Caco-2 (cell line): ENCODE measurements at regions of chr1 and their contacts with region 1.

Region 1: DNA sequence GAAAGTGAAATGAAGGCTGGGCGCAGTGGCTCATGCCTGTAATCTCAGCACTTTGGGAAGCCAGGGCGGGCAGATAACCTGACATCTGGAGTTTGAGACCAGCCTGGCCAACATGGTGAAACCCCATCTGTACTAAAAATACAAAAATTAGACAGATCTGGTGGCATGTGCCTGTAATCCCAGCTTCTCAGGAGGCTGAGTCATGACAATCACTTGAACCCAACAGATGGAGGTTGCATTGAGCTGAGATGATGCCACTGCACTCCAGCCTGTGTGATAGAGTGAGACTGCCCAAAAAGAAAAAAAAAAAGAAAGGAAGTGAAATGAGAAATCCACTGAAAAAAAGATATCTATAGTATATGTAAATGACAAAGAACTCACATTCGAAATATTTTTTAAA is 439.9 kb downstream of the DISC1 start:
- DNase-seq: no peak
- H3K4me3 ChIP-seq: no peak overlapping the region
- H3K4me3 Mint-ChIP-seq: no peak overlapping the region
- H3K27ac Mint-ChIP-seq: no peak overlapping the region
- H3K4me1 ChIP-seq: no peaks in the 10 kb centered on the region
- H3K4me1 Mint-ChIP-seq: no peaks in the 10 kb centered on the region
- H3K27me3 ChIP-seq: no peaks in the 10 kb centered on the region; the same call in 1 of the 2 replicates
- H3K27me3 Mint-ChIP-seq: peaks cover 12% of the 10 kb centered on the region
- CTCF ChIP-seq: no peak

Region 2: GRCh38 chr1:232036181-232036933 is 30.2 kb before region 1 on chr1:
- CTCF ChIA-PET with region 1: no interaction called
- POLR2A ChIA-PET with region 1: no interaction called
- intact Hi-C with region 1: loop called (anchors 2 kb)
- DNase-seq: no peak
- H3K4me3 ChIP-seq: no peak overlapping the region
- H3K4me3 Mint-ChIP-seq: no peak overlapping the region
- H3K27ac Mint-ChIP-seq: no peak overlapping the region
- H3K4me1 ChIP-seq: no peaks in the 10 kb centered on the region
- H3K4me1 Mint-ChIP-seq: no peaks in the 10 kb centered on the region
- H3K27me3 ChIP-seq: no peaks in the 10 kb centered on the region
- H3K27me3 Mint-ChIP-seq: no peaks in the 10 kb centered on the region
- CTCF ChIP-seq: no peak

Region 3: DNA sequence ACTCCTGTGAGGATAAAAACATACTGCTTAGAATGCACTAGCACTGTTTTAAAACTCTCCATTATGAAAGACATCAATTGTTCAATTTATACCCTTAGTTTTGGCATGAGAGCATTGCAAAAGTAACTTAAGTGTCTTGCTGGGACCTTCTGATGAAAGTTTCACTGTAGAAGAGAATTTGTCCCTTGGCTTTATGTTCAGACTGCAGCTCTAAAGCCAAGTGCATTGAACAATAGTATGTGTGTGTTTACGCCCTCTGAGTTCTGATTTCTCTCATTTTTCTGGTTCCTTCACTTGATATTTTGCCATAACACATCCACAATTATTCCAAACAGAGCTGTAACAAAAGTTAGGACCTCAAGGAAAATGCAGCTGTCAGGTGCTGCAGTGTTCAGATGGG is 34.7 kb after region 1 on chr1:
- CTCF ChIA-PET with region 1: no interaction called
- POLR2A ChIA-PET with region 1: no interaction called
- intact Hi-C with region 1: no loop called
- DNase-seq: no peak
- H3K4me3 ChIP-seq: no peak overlapping the region
- H3K4me3 Mint-ChIP-seq: no peak overlapping the region
- H3K27ac Mint-ChIP-seq: no peak overlapping the region
- H3K4me1 ChIP-seq: no peaks in the 10 kb centered on the region
- H3K4me1 Mint-ChIP-seq: no peaks in the 10 kb centered on the region
- H3K27me3 ChIP-seq: no peaks in the 10 kb centered on the region
- H3K27me3 Mint-ChIP-seq: peaks cover 15% of the 10 kb centered on the region
- CTCF ChIP-seq: no peak